Activated CD4-positive, alpha-beta T cell treated with anti-CD3 and anti-CD28 coated beads for 36 hours (primary cell): ENCODE measurements at regions of chr6 and their contacts with region 1.

Region 1: GRCh38 chr6:145263778-145264211 is 471.5 kb downstream of the EPM2A start:
- DNase-seq: no peak
- ATAC-seq: no peak
- H3K4me3 Mint-ChIP-seq: no peak overlapping the region
- H3K27ac Mint-ChIP-seq: no peak overlapping the region
- H3K4me1 Mint-ChIP-seq: no peaks in the 10 kb centered on the region
- H3K27me3 Mint-ChIP-seq: peaks cover 7% of the 10 kb centered on the region

Region 2: GRCh38 chr6:145583739-145584138 is 319.9 kb after region 1 on chr6:
- CTCF ChIA-PET with region 1: no interaction called
- POLR2A ChIA-PET with region 1: no interaction called
- intact Hi-C with region 1: loop called in 1 of 2 experiments (anchors 5 kb)
- DNase-seq: no peak
- ATAC-seq: no peak
- H3K4me3 Mint-ChIP-seq: no peak overlapping the region
- H3K27ac Mint-ChIP-seq: no peak overlapping the region
- H3K4me1 Mint-ChIP-seq: no peaks in the 10 kb centered on the region
- H3K27me3 Mint-ChIP-seq: peaks cover 12% of the 10 kb centered on the region